ENCODE measurements at regions of chr21 and their contacts with region 1.

Region 1: GRCh38 chr21:40143822-40144525 is 276.7 kb downstream of the PCP4 start:
- DNase-seq: peak; percentile 69
- H3K4me3 ChIP-seq: no peak overlapping the region; a peak in 1 of 4 replicates
- H3K27ac ChIP-seq: no peak overlapping the region
- H3K4me1 ChIP-seq: peaks cover 0 to 3% of the 10 kb centered on the region in 2 experiments; a peak in 1 of 4 replicates
- H3K27me3 ChIP-seq: no peaks in the 10 kb centered on the region
- CTCF ChIP-seq: peak; percentile 68
- EP300 ChIP-seq: no peak
- RAD21 ChIP-seq: peak; percentile 90

Region 2: GRCh38 chr21:40158366-40158765 is 14.4 kb after region 1 on chr21:
- CTCF ChIA-PET with region 1: interaction called, 17 read pairs
- POLR2A ChIA-PET with region 1: no interaction called
- DNase-seq: no peak
- H3K4me3 ChIP-seq: no peak overlapping the region
- H3K27ac ChIP-seq: no peak overlapping the region
- H3K4me1 ChIP-seq: no peaks in the 10 kb centered on the region; a peak in 1 of 4 replicates
- H3K27me3 ChIP-seq: no peaks in the 10 kb centered on the region
- CTCF ChIP-seq: no peak
- EP300 ChIP-seq: no peak
- RAD21 ChIP-seq: no peak

Region 3: DNA sequence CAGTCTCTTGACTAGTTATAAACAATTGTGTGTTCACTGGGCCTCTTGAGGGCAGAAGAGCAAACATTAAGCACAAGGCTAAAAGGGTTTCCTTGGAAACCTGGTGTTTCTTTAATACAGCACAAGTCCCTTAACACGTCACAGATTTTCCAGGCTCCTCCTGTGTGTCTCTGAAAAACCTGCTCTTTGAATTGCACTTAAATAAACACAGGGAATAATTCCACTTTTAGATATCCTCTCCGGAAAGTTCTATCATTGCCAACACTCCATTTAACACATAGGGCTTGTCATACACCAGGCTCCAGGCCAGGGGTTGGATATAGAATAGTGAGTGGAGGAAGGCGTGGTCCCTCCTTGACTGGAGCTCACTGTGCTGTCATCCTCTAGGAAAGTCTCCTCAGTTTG is 260.4 kb after region 1 on chr21:
- CTCF ChIA-PET with region 1: interaction called, 10 read pairs
- POLR2A ChIA-PET with region 1: no interaction called
- DNase-seq: no peak
- H3K4me3 ChIP-seq: no peak overlapping the region
- H3K27ac ChIP-seq: no peak overlapping the region
- H3K4me1 ChIP-seq: no peaks in the 10 kb centered on the region
- H3K27me3 ChIP-seq: no peaks in the 10 kb centered on the region
- CTCF ChIP-seq: no peak
- EP300 ChIP-seq: no peak
- RAD21 ChIP-seq: no peak

Measured in SK-N-SH (cell line).